Activated CD8-positive, alpha-beta T cell treated with anti-CD3 and anti-CD28 coated beads, Interleukin-2, amount 10 ng/mL, durations not matched to agents 7 days and 5 days (primary cell): ENCODE measurements at regions of chr12 and their contacts with region 1.

Region 1: GRCh38 chr12:6533923-6534694 is at the start of gene GAPDH:
- DNase-seq: peak; percentile 94
- ATAC-seq: peak; percentile 62
- H3K4me3 Mint-ChIP-seq: peak within 1 kb of the TSS; percentile 99
- H3K27ac Mint-ChIP-seq: peak within 1 kb of the TSS; percentile 100
- H3K4me1 Mint-ChIP-seq: peaks cover 59% of the 10 kb centered on the region
- H3K27me3 Mint-ChIP-seq: no peaks in the 10 kb centered on the region
- total RNA-seq, gene GAPDH: 6,175 to 6,471 TPM

Region 2: DNA sequence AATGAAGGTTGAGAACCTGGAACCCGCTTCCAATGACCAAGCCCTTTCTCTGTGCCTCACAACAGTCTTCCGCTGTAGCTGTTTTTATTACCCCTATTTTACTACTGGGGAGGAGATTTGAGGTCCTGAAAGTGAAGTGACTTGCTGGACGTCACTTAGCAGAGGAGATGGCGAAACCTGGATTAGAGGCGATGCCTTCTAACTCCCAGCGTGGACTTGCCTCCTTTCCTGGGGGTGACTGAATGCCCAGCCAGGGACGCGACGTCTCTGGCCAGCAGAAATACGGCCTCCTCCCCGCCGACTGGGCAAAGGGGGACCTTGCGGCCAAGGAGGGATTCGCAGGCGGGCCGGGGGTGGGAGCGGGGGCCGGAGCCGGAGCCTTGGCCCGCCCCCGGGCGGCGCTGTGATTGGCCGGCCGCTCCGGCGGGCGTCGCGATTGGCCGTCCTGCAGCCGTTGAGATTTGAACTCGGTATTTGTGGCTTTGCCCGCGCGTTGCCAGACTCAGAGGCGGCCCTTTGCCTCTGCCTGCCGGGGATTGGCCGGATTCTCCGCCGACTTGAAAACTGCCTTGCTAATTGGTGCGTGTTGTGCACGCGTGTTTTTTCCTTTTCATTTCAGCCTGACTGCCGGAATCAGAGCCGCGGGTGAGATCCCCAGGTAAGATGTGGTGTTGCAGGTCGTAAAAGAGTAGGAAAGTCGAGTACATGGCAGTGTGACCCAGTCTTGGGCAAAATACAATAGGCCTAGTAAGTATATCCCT is 40.4 kb before region 1 on chr12 and contains the start of gene NCAPD2:
- CTCF ChIA-PET with region 1: interaction called, 20 read pairs
- POLR2A ChIA-PET with region 1: interaction called, 31 read pairs
- DNase-seq: peak; percentile 98
- ATAC-seq: peak; percentile 89
- H3K4me3 Mint-ChIP-seq: peak within 1 kb of the TSS; percentile 93
- H3K27ac Mint-ChIP-seq: peak within 1 kb of the TSS; percentile 99
- H3K4me1 Mint-ChIP-seq: peaks cover 33% of the 10 kb centered on the region
- H3K27me3 Mint-ChIP-seq: no peaks in the 10 kb centered on the region
- total RNA-seq, gene NCAPD2: 195 to 201 TPM

Region 3: DNA sequence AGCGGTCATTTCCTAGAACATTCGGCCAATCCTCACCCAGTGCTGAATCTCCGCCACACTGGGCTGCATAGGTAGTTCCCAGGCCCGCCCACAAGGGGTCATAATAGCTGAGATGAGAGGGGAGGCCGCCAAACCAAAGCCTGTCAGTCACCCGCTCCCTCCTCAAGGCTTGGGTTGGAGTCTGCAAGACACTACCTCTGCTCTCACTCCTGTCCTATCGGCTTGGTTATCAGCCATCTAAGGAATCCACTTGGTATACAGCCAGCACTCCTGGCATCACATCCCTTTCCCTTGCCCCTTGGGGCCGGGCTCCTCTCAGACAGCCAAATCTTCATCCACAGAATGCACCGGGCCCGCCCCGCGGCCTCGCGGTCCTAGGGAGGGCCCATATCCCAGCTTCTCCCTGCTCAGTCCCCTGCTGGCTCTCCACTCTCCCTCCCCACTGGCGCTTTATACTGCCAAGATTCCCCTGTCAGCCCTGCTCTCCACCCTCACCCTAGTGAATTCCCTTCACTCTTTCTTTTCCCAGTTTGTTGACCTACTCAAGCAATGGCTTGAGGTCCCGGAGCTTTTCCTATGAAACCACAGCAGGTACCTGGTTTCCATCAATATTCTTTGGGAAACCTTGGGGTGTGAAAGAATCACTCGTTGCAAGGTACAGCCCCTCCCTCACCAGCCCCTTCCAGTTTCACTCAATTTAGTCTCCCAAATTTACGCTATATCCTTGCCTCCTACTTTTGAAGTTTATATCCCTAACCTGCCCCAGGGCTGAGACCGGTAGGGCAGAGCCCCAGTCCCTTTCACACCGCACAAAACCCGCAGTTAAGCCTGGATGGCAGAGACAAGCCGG is 20.3 kb after region 1 on chr12:
- CTCF ChIA-PET with region 1: interaction called, 71 read pairs
- POLR2A ChIA-PET with region 1: interaction called, 74 read pairs
- DNase-seq: peak; percentile 86
- ATAC-seq: peak; percentile 52
- H3K4me3 Mint-ChIP-seq: peak overlapping the region; percentile 80
- H3K27ac Mint-ChIP-seq: peak overlapping the region; percentile 43
- H3K4me1 Mint-ChIP-seq: peaks cover 60% of the 10 kb centered on the region
- H3K27me3 Mint-ChIP-seq: no peaks in the 10 kb centered on the region